A549 (cell line): ENCODE measurements at regions of chr5 and their contacts with region 1.

Region 1: DNA sequence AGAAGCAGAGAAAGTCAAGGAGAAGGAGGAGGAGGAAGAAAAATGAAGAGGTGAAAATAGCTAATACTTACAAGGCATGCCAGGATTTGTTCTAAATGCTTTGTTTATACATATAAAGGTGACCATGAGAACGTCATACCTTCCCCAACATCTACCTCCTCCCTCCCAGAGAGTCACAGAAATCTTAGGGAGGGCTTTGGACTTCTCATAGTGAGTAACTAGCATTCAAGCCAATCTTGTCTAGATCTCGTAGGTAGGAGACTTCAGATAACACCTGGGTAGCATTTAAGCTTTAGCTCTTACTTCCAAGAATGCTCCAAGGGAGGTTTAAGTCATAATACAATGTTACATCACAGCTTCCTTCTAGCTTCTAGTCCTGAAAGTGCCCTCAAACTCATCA is 36.5 kb upstream of the GPBP1 start:
- DNase-seq: peak in 1 of 2 experiments; percentile 7
- ATAC-seq: no peak
- H3K4me3 ChIP-seq: peak overlapping the region; percentile 35; the same call in 2 of the 3 replicates
- H3K27ac ChIP-seq: no peak overlapping the region; a peak in 1 of 6 replicates
- H3K4me1 ChIP-seq: no peaks in the 10 kb centered on the region
- CTCF ChIP-seq: no peak
- EP300 ChIP-seq: no peak
- POLR2A ChIP-seq: no peak
- RAD21 ChIP-seq: no peak

Region 2: GRCh38 chr5:56900858-56901578 is 236.4 kb before region 1 on chr5:
- CTCF ChIA-PET with region 1: interaction called, 112 read pairs
- POLR2A ChIA-PET with region 1: no interaction called
- DNase-seq: peak; percentile 47 to 55
- ATAC-seq: peak; percentile 89 to 91
- H3K4me3 ChIP-seq: no peak overlapping the region
- H3K27ac ChIP-seq: no peak overlapping the region
- H3K4me1 ChIP-seq: no peaks in the 10 kb centered on the region
- CTCF ChIP-seq: peak; percentile 91
- EP300 ChIP-seq: no peak
- POLR2A ChIP-seq: no peak
- RAD21 ChIP-seq: peak; percentile 91

Region 3: GRCh38 chr5:56909294-56910209 is 227.8 kb before region 1 on chr5 and contains the start of gene SETD9:
- CTCF ChIA-PET with region 1: interaction called, 112 read pairs
- POLR2A ChIA-PET with region 1: interaction called, 25 read pairs
- DNase-seq: peak; percentile 87 to 97
- ATAC-seq: peak; percentile 89 to 93
- H3K4me3 ChIP-seq: peak within 1 kb of the TSS; percentile 71
- H3K27ac ChIP-seq: peak within 1 kb of the TSS; percentile 86 to 94
- H3K4me1 ChIP-seq: peaks cover 4% of the 10 kb centered on the region; the same call in 1 of the 3 replicates
- CTCF ChIP-seq: no peak
- EP300 ChIP-seq: no peak
- POLR2A ChIP-seq: peak; percentile 86
- RAD21 ChIP-seq: no peak
- polyA plus RNA-seq, gene SETD9: 9.4 and 13.1 TPM in 2 replicates

Region 4: GRCh38 chr5:57150681-57151080 is 13.3 kb after region 1 on chr5:
- CTCF ChIA-PET with region 1: interaction called, 15 read pairs
- POLR2A ChIA-PET with region 1: no interaction called
- DNase-seq: no peak
- ATAC-seq: no peak
- H3K4me3 ChIP-seq: no peak overlapping the region
- H3K27ac ChIP-seq: no peak overlapping the region
- H3K4me1 ChIP-seq: no peaks in the 10 kb centered on the region
- CTCF ChIP-seq: no peak
- EP300 ChIP-seq: no peak
- POLR2A ChIP-seq: no peak
- RAD21 ChIP-seq: no peak

Region 5: DNA sequence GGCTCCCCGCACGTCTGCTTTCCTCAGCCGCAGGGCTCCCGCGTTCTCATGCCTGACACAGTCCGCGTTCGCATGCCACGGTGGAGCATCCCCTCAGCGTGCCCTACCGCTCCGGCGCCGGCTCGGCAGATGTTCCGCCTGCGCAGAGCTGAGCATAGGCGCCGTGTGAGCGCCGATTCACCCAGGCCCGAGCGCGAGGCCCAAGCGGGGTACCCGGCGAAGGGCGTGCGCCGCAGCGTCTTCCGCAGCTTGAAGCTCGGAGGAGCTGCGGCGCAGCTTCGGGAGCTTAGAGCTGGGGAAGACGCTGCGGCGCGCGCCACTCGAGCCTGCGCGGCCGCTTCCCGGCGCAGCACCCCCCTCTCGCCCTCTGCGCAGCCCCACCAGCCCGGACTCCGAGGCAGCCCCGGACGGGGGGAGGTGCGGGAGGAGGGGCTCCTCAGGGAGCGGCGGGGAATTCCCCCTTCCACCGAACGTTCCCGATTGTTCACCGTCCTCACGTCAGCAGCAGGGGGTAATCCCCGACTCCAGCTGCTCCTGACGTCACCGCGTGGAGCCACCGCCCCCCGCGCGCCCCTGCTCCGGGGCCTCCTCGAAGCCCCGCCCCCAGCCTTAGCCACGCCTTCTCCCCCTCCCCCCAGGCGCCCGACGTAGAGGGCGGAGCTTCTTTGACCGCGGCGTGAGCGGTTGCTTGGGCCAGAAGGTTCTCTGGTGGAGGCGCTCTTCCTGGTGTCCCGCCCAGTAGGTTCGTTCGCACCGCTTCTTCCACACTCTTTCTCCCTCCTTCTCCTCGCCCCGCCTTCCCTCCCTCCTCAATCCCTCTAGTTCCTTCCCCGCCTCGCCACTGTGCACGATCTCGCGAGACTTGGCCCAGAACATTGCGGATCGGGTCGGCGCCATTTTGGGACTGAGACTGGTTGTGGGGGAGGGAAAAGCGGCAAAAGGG is 36.1 kb after region 1 on chr5 and contains the start of gene GPBP1:
- CTCF ChIA-PET with region 1: interaction called, 6 read pairs
- POLR2A ChIA-PET with region 1: interaction called, 10 read pairs
- DNase-seq: peak; percentile 93 to 99
- ATAC-seq: peak; percentile 90 to 92
- H3K4me3 ChIP-seq: peak within 1 kb of the TSS; percentile 57
- H3K27ac ChIP-seq: peak within 1 kb of the TSS; percentile 87 to 97
- H3K4me1 ChIP-seq: peaks cover 26% of the 10 kb centered on the region; the same call in 2 of the 3 replicates
- CTCF ChIP-seq: no peak
- EP300 ChIP-seq: no peak
- POLR2A ChIP-seq: peak; percentile 35
- RAD21 ChIP-seq: peak in 1 of 2 experiments; percentile 12; a peak in 1 of 5 replicates
- polyA plus RNA-seq, gene GPBP1: 58.3 and 86.0 TPM in 2 replicates

Region 6: GRCh38 chr5:57221049-57221568 is 83.7 kb after region 1 on chr5:
- CTCF ChIA-PET with region 1: interaction called, 10 read pairs
- POLR2A ChIA-PET with region 1: no interaction called
- DNase-seq: peak; percentile 42 to 63
- ATAC-seq: peak; percentile 73 to 82; a peak in 5 of 6 replicates
- H3K4me3 ChIP-seq: no peak overlapping the region
- H3K27ac ChIP-seq: no peak overlapping the region
- H3K4me1 ChIP-seq: peaks cover 26% of the 10 kb centered on the region; the same call in 2 of the 3 replicates
- CTCF ChIP-seq: peak; percentile 85
- EP300 ChIP-seq: no peak
- POLR2A ChIP-seq: no peak
- RAD21 ChIP-seq: peak; percentile 83 to 84